HEK293T (cell line): ENCODE measurements at regions of chr16 and their contacts with region 1.

Region 1: GRCh38 chr16:21656795-21657768 is 4.7 kb upstream of the IGSF6 start:
- DNase-seq: peak; percentile 63

Region 2: DNA sequence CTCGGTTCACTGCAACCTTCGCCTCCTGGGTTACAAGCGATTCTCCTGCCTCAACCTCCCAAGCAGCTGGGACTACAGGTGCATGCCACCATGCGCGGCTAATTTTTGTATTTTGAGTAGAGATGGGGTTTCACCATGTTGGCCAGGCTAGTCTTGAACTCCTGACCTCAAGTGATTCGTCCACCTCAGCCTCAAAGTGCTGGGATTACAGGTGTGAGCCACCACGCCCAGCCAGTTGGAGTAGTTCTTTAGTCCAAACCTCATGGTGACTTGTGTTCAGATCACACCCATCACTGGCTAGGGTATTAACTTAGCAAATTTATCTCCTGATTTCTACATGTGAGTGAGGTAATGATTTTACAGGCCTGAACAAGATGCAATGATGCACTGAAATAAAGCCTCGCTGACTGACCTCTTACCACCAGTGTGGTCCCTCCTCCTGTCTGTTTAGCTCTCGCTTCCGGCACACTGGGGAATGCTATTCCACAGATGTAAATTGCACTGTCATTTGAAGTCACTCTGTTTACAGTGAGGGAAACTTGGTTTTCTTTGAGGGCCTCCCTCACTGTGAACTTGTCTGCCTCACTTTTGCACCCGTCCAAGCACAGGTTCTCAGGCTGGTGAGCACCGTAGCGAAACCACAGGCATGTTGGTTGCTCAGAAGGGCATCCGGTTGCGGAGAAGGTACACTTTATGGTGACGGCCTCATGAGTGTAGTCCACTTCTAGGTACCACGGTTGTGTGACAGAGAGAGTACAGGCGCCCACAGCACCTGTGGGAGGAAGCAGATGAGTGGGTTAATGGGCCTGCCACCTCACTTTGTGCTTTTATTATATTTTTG is 10.1 kb before region 1 on chr16:
- CTCF ChIA-PET with region 1: no interaction called
- POLR2A ChIA-PET with region 1: no interaction called
- DNase-seq: no peak

Region 3: GRCh38 chr16:21708533-21709115 is 51.5 kb after region 1 on chr16:
- CTCF ChIA-PET with region 1: interaction called, 11 read pairs
- POLR2A ChIA-PET with region 1: no interaction called
- DNase-seq: peak; percentile 66